ENCODE measurements at regions of chr2 and their contacts with region 1.

Region 1: DNA sequence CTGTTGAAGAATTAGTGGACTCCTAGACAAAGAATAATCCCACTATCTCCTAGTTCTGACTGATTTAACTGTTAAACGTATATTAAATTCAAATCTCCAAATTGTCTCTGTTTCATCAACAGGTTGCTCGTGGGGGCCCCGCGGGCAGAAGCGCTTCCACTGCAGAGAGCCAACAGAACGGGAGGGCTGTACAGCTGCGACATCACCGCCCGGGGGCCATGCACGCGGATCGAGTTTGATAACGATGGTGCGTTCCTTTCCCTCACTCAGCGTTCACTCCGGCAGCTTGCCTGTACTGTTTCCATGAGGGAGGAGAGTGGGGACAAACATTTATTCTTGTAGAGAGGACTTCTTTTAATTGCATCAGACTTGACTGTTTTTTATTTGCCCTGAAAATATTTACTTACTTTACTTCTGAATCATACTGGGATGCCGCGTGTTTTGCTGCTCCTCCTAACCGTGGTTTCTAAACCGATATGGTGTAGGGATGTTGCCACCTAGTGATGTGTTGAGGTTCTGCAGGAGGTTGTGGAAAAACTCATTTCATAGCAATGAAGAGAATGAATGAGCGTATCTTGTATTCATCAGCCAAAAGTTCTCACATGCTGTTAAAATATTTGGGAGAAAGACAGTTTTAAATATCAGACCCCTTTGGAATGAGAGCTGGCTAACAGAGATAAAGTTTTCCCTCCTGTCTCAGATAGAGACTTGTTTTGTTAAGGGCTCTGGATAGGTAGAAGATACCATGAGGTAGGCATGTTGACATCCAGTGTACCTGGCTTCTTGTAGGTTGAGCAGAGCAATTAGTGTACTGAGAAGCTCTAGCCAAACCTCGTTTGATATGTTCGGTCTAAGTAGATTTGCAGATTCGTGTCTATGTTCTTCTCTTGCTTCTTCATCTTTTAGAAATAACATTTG is 38.3 kb downstream of the ITGA6 start:
- DNase-seq: peak; percentile 79
- H3K4me3 ChIP-seq: no peak overlapping the region
- H3K27ac ChIP-seq: no peak overlapping the region
- H3K4me1 ChIP-seq: peaks cover 27% of the 10 kb centered on the region
- H3K27me3 ChIP-seq: no peaks in the 10 kb centered on the region
- CTCF ChIP-seq: peak; percentile 71 to 75
- POLR2A ChIP-seq: no peak

Region 2: DNA sequence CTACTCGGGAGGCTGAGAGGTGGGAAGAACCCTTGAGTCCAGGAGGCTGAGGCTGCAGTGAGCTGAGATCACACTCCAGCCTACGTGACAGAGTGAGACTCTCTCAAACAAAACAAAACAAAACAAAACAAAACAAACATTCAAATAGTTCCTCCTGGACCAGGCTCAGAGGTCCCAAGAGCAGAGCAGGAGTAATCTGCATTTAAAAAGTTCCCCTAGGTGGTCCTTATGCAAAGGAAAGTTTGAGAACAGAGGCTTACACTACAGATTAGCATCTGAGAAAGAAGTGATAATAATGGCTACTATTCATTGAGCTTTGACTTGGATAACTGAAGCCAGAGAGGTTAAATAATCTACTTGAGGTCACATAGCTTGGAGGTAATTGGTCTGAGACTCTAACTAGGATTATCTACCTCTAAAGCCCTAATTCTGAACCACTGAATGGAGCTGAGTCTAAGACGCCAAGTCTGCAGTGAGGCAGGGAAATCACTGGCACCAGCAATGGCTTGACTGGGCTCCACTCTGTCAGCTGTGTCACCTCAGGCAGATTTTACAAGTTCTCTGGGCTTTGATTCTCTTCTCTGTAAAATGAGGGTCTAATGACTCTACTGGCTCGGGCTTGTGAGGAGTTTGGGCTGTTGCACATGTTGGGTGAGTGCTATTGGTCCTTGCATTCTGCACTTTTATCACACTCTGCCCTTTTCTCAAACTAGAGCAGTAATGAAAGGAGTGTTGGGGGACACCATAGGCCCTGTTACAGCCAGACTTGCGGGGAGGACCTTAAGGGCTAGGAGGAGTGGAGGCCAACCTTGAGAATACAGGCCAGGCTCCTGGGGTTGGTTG is 333.7 kb before region 1 on chr2:
- CTCF ChIA-PET with region 1: interaction called, 16 read pairs
- POLR2A ChIA-PET with region 1: no interaction called
- dilution Hi-C with region 1: no loop called
- intact Hi-C with region 1: loop called (anchors 1 kb)
- DNase-seq: no peak
- H3K4me3 ChIP-seq: no peak overlapping the region
- H3K27ac ChIP-seq: no peak overlapping the region
- H3K4me1 ChIP-seq: no peaks in the 10 kb centered on the region
- H3K27me3 ChIP-seq: peaks cover 3% of the 10 kb centered on the region in 2 experiments
- CTCF ChIP-seq: no peak
- POLR2A ChIP-seq: no peak

Region 3: DNA sequence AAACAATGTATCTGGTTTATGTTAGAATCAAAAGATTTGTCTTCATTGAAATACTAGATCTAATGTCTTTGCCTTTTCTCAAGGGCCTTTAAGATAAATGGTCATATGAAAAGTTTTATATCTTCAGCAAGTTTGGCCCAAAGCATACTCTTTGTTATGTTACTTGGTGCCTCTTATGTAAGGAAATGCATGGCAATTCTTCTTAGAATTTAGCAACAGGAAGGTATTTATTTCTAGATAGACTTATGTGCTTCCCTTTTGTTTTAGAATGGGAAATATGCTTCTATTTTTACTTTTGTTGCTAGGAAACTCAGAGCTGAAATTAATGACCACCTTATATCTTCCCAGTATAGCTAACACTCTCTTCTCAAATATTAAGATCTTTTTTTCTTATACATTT is 245.6 kb before region 1 on chr2:
- CTCF ChIA-PET with region 1: interaction called, 15 read pairs
- POLR2A ChIA-PET with region 1: no interaction called
- dilution Hi-C with region 1: no loop called
- intact Hi-C with region 1: no loop called
- DNase-seq: peak; percentile 66
- H3K4me3 ChIP-seq: no peak overlapping the region
- H3K27ac ChIP-seq: no peak overlapping the region
- H3K4me1 ChIP-seq: peaks cover 4% of the 10 kb centered on the region
- H3K27me3 ChIP-seq: no peaks in the 10 kb centered on the region
- CTCF ChIP-seq: no peak
- POLR2A ChIP-seq: no peak

Region 4: DNA sequence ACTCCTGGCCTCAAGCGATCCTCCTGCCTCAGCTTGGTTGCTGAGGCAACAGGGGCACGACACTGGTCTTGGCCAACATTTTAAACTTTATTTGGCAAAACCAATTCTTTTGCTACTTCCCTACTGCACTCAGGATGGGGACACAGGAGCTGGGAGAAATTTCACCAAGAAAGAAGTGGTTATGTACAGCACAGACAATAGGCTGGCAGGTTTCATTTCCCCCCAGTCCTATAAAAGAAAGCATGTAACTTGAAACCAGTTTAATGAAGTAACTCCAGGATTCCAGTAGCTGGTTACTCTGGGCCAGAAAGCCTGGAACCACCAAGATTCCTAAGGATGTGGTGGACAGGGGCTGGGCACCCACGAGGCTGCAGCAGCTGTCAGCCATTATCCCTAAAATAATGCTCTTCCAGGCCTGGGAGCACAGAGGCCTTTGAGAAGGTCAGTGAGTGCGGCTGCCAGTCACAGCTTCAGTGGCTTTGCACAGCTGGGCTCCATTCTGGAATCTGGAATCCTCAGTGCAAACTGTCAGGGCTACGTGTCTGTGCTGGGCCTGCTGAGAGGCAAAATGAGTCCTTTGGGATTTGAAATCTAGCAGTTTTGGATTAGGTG is 180.6 kb before region 1 on chr2:
- CTCF ChIA-PET with region 1: interaction called, 40 read pairs
- POLR2A ChIA-PET with region 1: no interaction called
- dilution Hi-C with region 1: no loop called
- intact Hi-C with region 1: loop called (anchors 1 kb)
- DNase-seq: peak; percentile 79
- H3K4me3 ChIP-seq: no peak overlapping the region
- H3K27ac ChIP-seq: peak overlapping the region; percentile 94
- H3K4me1 ChIP-seq: peaks cover 76% of the 10 kb centered on the region
- H3K27me3 ChIP-seq: no peaks in the 10 kb centered on the region
- CTCF ChIP-seq: no peak
- POLR2A ChIP-seq: no peak

Region 5: GRCh38 chr2:172427256-172427989 is 38.3 kb before region 1 on chr2 and contains the start of gene ITGA6:
- CTCF ChIA-PET with region 1: interaction called, 167 read pairs
- POLR2A ChIA-PET with region 1: interaction called, 3 read pairs
- dilution Hi-C with region 1: no loop called
- intact Hi-C with region 1: loop called (anchors 1 kb)
- DNase-seq: peak; percentile 78
- H3K4me3 ChIP-seq: peak within 1 kb of the TSS; percentile 67 to 98 (median 68)
- H3K27ac ChIP-seq: peak within 1 kb of the TSS; percentile 52
- H3K4me1 ChIP-seq: peaks cover 40% of the 10 kb centered on the region
- H3K27me3 ChIP-seq: no peaks in the 10 kb centered on the region
- CTCF ChIP-seq: peak; percentile 4 to 33
- POLR2A ChIP-seq: peak; percentile 87
- total RNA-seq, gene ITGA6: 174 and 208 TPM in 2 replicates

Region 6: DNA sequence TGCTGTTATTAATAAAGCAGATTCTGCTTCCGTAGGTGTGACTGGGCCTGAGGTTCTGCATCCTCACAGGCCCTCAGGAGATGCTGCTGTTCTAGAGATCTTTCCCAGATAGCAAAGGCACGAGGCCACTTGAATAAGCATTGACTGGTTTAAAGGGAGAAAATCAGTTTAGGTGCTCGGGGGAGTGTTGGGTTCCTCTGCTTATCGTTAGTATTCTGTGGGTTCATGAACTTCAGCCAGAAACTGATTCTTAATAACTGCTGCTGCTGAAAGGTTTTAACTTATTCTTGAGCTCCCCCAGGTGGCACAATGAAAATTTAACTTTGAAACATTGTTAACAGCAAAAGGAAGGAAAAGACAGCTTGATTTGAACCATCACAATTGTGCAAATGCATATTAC is 18.6 kb after region 1 on chr2:
- CTCF ChIA-PET with region 1: interaction called, 13 read pairs
- POLR2A ChIA-PET with region 1: no interaction called
- dilution Hi-C with region 1: no loop called
- intact Hi-C with region 1: no loop called
- DNase-seq: peak; percentile 55
- H3K4me3 ChIP-seq: no peak overlapping the region
- H3K27ac ChIP-seq: no peak overlapping the region
- H3K4me1 ChIP-seq: peaks cover 22% of the 10 kb centered on the region
- H3K27me3 ChIP-seq: no peaks in the 10 kb centered on the region
- CTCF ChIP-seq: no peak
- POLR2A ChIP-seq: no peak

Region 7: DNA sequence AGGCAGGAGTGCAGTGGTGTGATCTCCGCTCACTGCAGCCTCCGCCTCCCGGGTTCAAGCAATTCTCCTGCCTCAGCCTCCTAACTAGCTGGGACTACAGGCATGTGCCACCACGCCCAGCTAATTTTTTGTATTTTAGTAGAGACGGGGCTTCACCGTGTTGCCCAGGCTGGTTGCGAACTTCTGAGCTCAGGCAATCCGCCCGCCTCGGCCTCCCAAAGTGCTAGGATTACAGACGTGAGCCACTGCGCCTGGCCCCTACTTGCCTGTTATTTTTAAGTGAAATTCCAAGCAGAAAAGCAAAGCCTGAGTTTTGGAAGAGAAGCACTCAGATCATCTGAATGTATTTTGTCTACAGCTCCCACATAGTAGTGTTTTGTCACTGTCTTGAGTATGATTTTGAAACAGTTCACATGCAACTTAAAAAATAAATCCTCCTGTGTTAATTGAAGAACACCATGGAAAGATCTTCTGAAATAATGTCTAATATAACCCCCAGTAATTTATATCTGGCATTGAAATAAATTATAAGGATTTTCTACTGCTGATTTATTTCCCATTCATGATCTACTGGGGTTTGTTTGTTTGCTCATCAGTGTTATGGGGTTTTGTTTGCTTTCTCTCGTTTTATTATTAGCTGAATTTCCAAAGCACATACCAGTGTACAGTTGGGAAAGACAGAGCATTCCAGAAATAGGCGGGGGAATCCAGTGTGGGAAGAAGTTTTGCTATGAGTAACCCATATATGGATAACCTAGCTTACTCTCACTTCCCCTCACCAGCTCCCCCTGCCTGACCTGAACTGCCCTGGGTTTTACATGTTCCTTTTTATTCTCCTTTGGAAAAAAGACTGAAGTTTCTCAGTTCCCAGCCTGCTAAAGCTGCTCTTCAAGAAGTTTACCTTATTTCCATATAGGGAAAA is 529.9 kb after region 1 on chr2:
- CTCF ChIA-PET with region 1: no interaction called
- POLR2A ChIA-PET with region 1: no interaction called
- dilution Hi-C with region 1: no loop called
- intact Hi-C with region 1: no loop called
- DNase-seq: peak; percentile 78
- H3K4me3 ChIP-seq: no peak overlapping the region
- H3K27ac ChIP-seq: no peak overlapping the region
- H3K4me1 ChIP-seq: peaks cover 9% of the 10 kb centered on the region
- H3K27me3 ChIP-seq: no peaks in the 10 kb centered on the region
- CTCF ChIP-seq: peak in 1 of 2 donors; percentile 23
- POLR2A ChIP-seq: no peak